ENCODE measurements at regions of chr10 and their contacts with region 1.

Region 1: DNA sequence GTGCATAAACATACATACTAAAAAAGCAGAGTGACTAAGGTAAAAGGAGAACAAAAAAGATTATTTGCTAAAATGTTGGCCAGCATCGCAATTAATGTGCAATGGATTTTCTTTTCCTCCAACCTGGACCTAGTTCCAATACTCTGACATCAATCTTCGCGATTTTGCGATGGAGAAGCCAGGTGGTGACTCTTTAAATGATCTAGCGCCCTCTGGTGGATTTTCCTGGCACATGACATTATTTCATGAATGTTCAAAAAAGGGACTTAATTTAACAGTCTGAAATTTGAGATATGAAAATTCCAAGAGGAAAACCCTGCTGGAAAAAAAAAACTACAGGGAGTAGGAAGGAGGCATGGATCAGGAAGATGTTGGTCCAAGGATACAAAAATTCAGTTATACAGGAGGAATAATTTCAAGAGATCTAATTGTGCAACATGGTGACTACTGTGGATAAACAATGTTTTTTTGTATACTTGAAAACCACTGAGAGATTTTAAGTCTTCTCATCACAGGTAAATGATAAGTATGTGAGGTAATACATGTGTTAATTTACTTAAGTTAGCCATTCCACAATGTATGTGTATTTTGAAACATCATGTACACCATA is 4.3 kb upstream of the KCNMA1 start:
- DNase-seq: no peak
- ATAC-seq: peak in 3 of 4 donors; percentile 32 to 55 (median 43)
- H3K4me3 ChIP-seq: no peak overlapping the region
- H3K27ac ChIP-seq: no peak overlapping the region
- H3K4me1 ChIP-seq: peaks cover 2% of the 10 kb centered on the region
- H3K27me3 ChIP-seq: peaks cover 0 to 4% (median 3%) of the 10 kb centered on the region in 3 donors
- CTCF ChIP-seq: peak; percentile 88

Region 2: GRCh38 chr10:77247031-77247990 is 394.6 kb before region 1 on chr10:
- intact Hi-C with region 1: loop called in 1 of 2 experiments (anchors 10 kb)
- DNase-seq: no peak
- ATAC-seq: no peak
- H3K4me3 ChIP-seq: no peak overlapping the region
- H3K27ac ChIP-seq: no peak overlapping the region
- H3K4me1 ChIP-seq: peaks cover 2% of the 10 kb centered on the region
- H3K27me3 ChIP-seq: no peaks in the 10 kb centered on the region
- CTCF ChIP-seq: no peak

Region 3: GRCh38 chr10:77391605-77392235 is 250.2 kb before region 1 on chr10:
- intact Hi-C with region 1: loop called (anchors 1 to 5 kb)
- DNase-seq: peak; percentile 74 to 84
- ATAC-seq: peak; percentile 65 to 85 (median 70)
- H3K4me3 ChIP-seq: no peak overlapping the region
- H3K27ac ChIP-seq: peak overlapping the region; percentile 30
- H3K4me1 ChIP-seq: peaks cover 26% of the 10 kb centered on the region
- H3K27me3 ChIP-seq: no peaks in the 10 kb centered on the region
- CTCF ChIP-seq: peak; percentile 59

Region 4: GRCh38 chr10:77494327-77494726 is 147.6 kb before region 1 on chr10:
- intact Hi-C with region 1: loop called (anchors 2 to 5 kb)
- DNase-seq: no peak
- ATAC-seq: no peak
- H3K4me3 ChIP-seq: no peak overlapping the region
- H3K27ac ChIP-seq: no peak overlapping the region
- H3K4me1 ChIP-seq: peaks cover 66% of the 10 kb centered on the region
- H3K27me3 ChIP-seq: no peaks in the 10 kb centered on the region
- CTCF ChIP-seq: peak; percentile 31

Region 5: DNA sequence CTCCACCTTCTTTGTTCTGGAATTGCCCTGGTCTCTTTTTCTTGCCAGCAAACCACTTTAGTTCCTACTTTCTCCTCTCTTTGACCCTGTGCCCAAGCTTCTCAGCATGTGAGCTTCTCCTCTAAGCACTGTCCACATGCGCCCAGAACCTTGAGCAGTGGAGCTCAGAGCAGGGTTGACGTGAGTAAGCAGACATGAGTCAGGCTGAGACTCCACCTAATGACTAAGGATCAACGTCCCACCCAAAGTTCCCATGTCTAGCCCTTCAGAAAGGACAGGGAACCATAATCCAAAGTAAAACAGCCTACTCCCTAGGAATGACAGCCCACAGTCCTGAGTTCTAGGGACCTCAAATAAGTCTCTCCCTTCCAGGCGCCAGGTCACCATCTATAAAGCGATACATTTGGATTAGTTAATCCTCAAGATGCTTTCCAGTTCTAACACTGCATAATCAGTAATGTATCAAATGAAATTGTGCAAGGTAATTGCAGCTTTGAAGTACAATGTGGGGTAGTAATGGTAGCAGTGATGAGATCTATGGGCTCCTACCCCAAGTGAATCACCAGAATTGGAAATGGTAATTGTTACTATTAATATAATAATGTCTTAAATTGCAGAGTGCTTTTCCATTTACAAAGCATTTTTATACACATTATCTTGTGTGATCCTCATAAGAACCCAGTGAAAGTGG is 48.8 kb before region 1 on chr10:
- intact Hi-C with region 1: loop called in 1 of 2 experiments (anchors 5 kb)
- DNase-seq: peak in 1 of 2 donors; percentile 46
- ATAC-seq: peak; percentile 55 to 70 (median 66)
- H3K4me3 ChIP-seq: no peak overlapping the region
- H3K27ac ChIP-seq: peak overlapping the region; percentile 68
- H3K4me1 ChIP-seq: peaks cover 40% of the 10 kb centered on the region
- H3K27me3 ChIP-seq: no peaks in the 10 kb centered on the region
- CTCF ChIP-seq: no peak

Measured in psoas muscle (tissue), 8 donors.